Naive thymus-derived CD4-positive, alpha-beta T cell (primary cell): ENCODE measurements at regions of chr3 and their contacts with region 1.

Region 1: DNA sequence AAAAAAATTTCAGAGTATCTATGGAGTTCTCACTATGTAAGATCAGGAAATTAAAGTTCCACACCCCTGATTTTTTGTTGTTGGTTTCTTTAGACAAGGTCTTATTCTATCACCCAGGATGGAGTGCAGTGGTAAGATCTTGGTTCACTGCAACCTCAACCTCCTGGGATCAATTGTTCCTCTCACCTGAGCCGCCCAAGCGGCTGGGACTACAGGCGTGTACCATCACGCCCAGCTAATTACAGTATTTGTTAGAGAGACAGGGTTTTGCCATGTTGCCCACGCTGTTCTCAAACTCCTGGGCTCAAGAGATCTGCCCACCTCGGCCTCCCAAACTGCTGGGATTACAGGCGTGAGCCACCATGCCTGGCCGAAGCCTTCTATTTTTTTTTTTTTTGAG is 12.4 kb downstream of the QRICH1 start:
- DNase-seq: no peak
- ATAC-seq: no peak
- H3K4me3 ChIP-seq: no peak overlapping the region
- H3K4me3 Mint-ChIP-seq: no peak overlapping the region
- H3K27ac ChIP-seq: no peak overlapping the region
- H3K27ac Mint-ChIP-seq: no peak overlapping the region
- H3K4me1 ChIP-seq: peaks cover 0 to 7% of the 10 kb centered on the region in 2 donors
- H3K4me1 Mint-ChIP-seq: peaks cover 4 to 39% (median 18%) of the 10 kb centered on the region in 7 donors
- H3K27me3 ChIP-seq: no peaks in the 10 kb centered on the region
- H3K27me3 Mint-ChIP-seq: no peaks in the 10 kb centered on the region

Region 2: DNA sequence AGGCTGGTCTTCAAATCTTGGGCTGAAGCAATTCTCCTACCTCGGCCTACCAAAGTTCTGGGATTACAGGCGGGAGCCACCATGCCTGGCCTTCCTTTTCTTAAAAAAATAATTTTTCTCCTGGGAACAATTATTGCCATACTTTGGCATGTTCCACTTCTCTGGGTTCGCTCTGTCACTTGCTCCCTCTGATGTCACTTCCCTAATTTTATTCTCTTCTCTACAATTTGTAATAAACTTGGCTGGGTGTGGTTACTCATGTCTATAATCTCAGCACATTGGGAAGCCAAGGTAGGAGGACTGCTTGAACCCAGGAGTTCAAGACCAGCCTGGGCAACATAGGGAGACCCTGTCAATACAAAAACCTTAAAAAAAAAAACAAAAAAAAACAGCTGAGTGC is 46.1 kb before region 1 on chr3:
- CTCF ChIA-PET with region 1: interaction called, 3 read pairs
- POLR2A ChIA-PET with region 1: no interaction called
- intact Hi-C with region 1: loop called in 1 of 2 experiments (anchors 5 kb)
- DNase-seq: no peak
- ATAC-seq: peak; percentile 34
- H3K4me3 ChIP-seq: no peak overlapping the region
- H3K4me3 Mint-ChIP-seq: no peak overlapping the region
- H3K27ac ChIP-seq: no peak overlapping the region
- H3K27ac Mint-ChIP-seq: peak overlapping the region in 1 of 9 donors; percentile 38
- H3K4me1 ChIP-seq: no peaks in the 10 kb centered on the region
- H3K4me1 Mint-ChIP-seq: peaks cover 0 to 8% (median 3%) of the 10 kb centered on the region in 7 donors
- H3K27me3 ChIP-seq: no peaks in the 10 kb centered on the region
- H3K27me3 Mint-ChIP-seq: no peaks in the 10 kb centered on the region

Region 3: GRCh38 chr3:49882166-49882565 is 800.7 kb after region 1 on chr3:
- CTCF ChIA-PET with region 1: no interaction called
- POLR2A ChIA-PET with region 1: no interaction called
- intact Hi-C with region 1: no loop called
- DNase-seq: no peak
- ATAC-seq: no peak
- H3K4me3 ChIP-seq: no peak overlapping the region
- H3K4me3 Mint-ChIP-seq: no peak overlapping the region
- H3K27ac ChIP-seq: no peak overlapping the region
- H3K27ac Mint-ChIP-seq: no peak overlapping the region
- H3K4me1 ChIP-seq: no peaks in the 10 kb centered on the region
- H3K4me1 Mint-ChIP-seq: peaks cover 0 to 2% (median 0%) of the 10 kb centered on the region in 7 donors
- H3K27me3 ChIP-seq: no peaks in the 10 kb centered on the region
- H3K27me3 Mint-ChIP-seq: peaks cover 0 to 7% (median 0%) of the 10 kb centered on the region in 5 donors